ENCODE measurements at regions of chr3 and their contacts with region 1.

Region 1: DNA sequence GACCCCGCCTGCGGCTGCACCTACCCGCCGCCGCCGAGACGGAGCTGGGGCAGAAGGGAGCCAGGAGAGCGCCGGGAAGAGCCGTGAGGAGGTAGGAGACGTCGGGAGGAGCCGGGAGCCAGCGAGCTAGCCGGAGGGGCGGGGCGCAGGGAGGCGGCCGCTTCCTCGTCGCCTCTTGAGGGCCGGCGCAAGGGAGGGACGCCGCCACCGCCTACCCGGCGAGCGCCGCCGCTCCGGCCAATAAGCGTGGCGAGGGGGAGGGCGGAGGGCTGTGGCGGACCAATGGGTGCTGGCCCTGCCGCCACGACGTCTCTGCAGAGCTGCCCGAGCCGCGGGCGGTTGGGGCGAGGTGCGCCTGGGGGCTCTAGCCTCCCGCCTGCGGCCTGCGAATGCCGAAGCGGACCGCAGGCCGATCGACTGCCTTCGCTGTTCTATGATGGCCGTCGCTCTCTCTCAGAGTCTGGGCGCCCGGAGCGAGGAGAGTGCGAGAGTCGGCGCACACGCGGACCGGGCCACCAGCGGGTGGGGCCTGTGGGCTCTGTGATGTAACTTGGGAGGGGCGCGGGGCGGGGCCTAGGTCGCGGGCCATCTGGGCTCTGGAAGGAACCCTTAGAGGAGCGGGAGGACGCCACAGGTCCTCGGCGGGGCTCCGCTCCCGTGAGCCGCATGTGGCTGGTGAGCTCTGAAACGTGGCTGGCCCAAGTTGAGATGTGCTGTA is 72.7 kb upstream of the MAP4 start:
- DNase-seq: peak; percentile 95
- H3K4me3 Mint-ChIP-seq: peak overlapping the region; percentile 94
- H3K27ac Mint-ChIP-seq: peak overlapping the region; percentile 95
- H3K4me1 Mint-ChIP-seq: peaks cover 29% of the 10 kb centered on the region
- H3K27me3 Mint-ChIP-seq: no peaks in the 10 kb centered on the region

Region 2: GRCh38 chr3:47781685-47782445 is 307.0 kb before region 1 on chr3 and contains the start of gene SMARCC1:
- CTCF ChIA-PET with region 1: no interaction called
- intact Hi-C with region 1: loop called (anchors 1 kb)
- DNase-seq: peak; percentile 99
- H3K4me3 Mint-ChIP-seq: peak within 1 kb of the TSS; percentile 95
- H3K27ac Mint-ChIP-seq: peak within 1 kb of the TSS; percentile 92
- H3K4me1 Mint-ChIP-seq: peaks cover 21% of the 10 kb centered on the region
- H3K27me3 Mint-ChIP-seq: no peaks in the 10 kb centered on the region
- total RNA-seq, gene SMARCC1: 82.5 to 84.5 TPM

Region 3: DNA sequence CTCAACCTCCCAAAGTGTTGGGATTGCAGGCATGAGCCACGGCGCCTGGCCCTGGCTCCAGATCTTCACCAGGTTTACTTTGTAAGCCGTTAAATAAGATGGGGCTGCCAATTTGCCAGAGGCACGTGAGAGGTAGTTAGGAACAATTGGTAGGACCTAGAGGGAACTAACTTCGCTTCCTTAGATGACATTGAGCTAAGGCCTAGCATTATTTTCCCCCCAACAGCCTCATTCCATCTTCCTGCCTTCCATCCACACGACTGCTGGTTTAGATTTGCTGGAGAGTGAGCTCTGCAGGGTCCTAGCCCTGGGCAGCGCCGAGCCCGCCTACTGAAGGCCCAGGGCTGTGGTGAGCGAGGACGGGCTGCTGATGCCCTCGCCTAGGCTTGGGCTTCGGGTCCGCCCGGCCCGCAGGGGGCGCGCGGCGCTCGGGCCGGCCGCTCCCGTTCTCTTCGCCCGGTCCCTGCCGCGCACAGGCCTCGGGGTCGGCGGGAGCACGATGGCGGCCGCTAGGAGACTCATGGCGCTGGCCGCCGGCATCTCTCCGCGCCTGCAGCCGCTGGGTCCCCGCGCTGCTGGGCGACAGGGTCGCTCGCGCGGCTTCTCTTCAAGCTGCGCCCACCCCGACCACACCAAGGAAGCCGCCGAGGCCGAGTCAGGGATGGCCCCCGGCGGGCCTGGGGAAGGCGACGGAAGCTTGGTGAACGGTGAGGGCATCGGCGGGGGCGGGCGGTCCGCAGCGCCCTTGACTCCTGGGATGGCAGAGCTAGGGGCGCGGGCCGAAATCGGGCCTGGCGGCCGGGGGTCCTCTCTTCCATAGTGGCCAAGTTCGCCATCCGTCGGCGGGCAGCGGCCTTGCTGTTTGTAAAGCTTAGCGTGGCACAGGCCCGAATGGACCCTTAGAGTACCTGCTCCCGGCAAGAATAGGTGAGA is 264.1 kb before region 1 on chr3:
- CTCF ChIA-PET with region 1: interaction called, 3 read pairs
- intact Hi-C with region 1: loop called (anchors 5 kb)
- DNase-seq: peak; percentile 77
- H3K4me3 Mint-ChIP-seq: peak overlapping the region; percentile 86
- H3K27ac Mint-ChIP-seq: peak overlapping the region; percentile 84
- H3K4me1 Mint-ChIP-seq: peaks cover 34% of the 10 kb centered on the region
- H3K27me3 Mint-ChIP-seq: no peaks in the 10 kb centered on the region

Region 4: DNA sequence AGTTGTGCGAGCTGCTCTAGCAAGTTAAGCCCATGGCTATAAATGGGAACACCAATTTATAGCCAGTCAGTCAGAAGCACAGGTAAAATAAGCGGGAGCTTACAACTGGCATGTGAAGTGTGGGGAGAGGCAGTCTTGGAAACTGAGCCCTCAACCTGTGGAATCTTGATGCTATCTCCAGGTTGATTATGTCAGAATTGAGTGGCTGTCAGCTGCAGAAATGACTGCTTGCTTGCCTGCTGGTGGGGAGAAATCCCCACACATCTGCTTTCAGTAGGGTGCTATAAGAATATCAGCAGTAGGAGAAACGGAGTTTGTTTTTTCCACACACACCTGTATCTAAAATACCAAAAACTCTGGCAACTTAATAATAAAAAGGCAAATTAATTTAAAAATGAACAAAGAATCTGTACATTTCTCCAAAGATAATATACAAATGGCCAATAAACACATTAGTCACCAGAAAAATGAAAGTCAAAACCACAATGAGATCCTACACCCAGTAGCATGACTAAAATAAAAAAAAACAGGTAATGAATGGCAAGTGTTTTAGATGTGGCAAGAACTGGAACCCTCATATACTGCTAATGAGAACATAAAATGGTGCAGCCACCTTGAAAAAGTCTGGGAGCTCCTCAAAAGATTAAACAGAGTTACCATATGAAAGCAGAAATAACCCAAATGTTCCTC is 46.7 kb before region 1 on chr3:
- CTCF ChIA-PET with region 1: no interaction called
- intact Hi-C with region 1: loop called (anchors 2 kb)
- DNase-seq: peak; percentile 7
- H3K4me3 Mint-ChIP-seq: no peak overlapping the region
- H3K27ac Mint-ChIP-seq: no peak overlapping the region
- H3K4me1 Mint-ChIP-seq: peaks cover 14% of the 10 kb centered on the region
- H3K27me3 Mint-ChIP-seq: no peaks in the 10 kb centered on the region

Region 5: GRCh38 chr3:48119505-48120193 is 30.7 kb after region 1 on chr3:
- CTCF ChIA-PET with region 1: no interaction called
- intact Hi-C with region 1: no loop called
- DNase-seq: no peak
- H3K4me3 Mint-ChIP-seq: no peak overlapping the region
- H3K27ac Mint-ChIP-seq: no peak overlapping the region
- H3K4me1 Mint-ChIP-seq: no peaks in the 10 kb centered on the region
- H3K27me3 Mint-ChIP-seq: no peaks in the 10 kb centered on the region

Region 6: GRCh38 chr3:48188266-48189201 is 99.6 kb after region 1 on chr3 and contains the start of gene CDC25A:
- CTCF ChIA-PET with region 1: no interaction called
- intact Hi-C with region 1: loop called (anchors 1 kb)
- DNase-seq: peak; percentile 98
- H3K4me3 Mint-ChIP-seq: peak within 1 kb of the TSS; percentile 88
- H3K27ac Mint-ChIP-seq: peak within 1 kb of the TSS; percentile 61
- H3K4me1 Mint-ChIP-seq: peaks cover 17% of the 10 kb centered on the region
- H3K27me3 Mint-ChIP-seq: peaks cover 11% of the 10 kb centered on the region
- total RNA-seq, gene CDC25A: 40.8 to 41.8 TPM

Region 7: GRCh38 chr3:48268381-48269183 is 179.7 kb after region 1 on chr3:
- CTCF ChIA-PET with region 1: no interaction called
- intact Hi-C with region 1: loop called (anchors 2 kb)
- DNase-seq: peak; percentile 96
- H3K4me3 Mint-ChIP-seq: peak overlapping the region; percentile 37
- H3K27ac Mint-ChIP-seq: peak overlapping the region; percentile 88
- H3K4me1 Mint-ChIP-seq: peaks cover 32% of the 10 kb centered on the region
- H3K27me3 Mint-ChIP-seq: no peaks in the 10 kb centered on the region